ENCODE measurements at regions of chr6 and their contacts with region 1.

Region 1: GRCh38 chr6:137271245-137272183 is 52.3 kb upstream of the IFNGR1 start:
- DNase-seq: no peak
- ATAC-seq: peak; percentile 92
- H3K4me3 ChIP-seq: no peak overlapping the region
- H3K27ac ChIP-seq: no peak overlapping the region
- H3K4me1 ChIP-seq: peaks cover 3% of the 10 kb centered on the region
- H3K27me3 ChIP-seq: no peaks in the 10 kb centered on the region
- CTCF ChIP-seq: peak; percentile 80 to 91 (median 85)
- EP300 ChIP-seq: no peak
- POLR2A ChIP-seq: no peak
- RAD21 ChIP-seq: peak; percentile 100

Region 2: GRCh38 chr6:137076277-137077068 is 195.0 kb before region 1 on chr6:
- CTCF ChIA-PET with region 1: interaction called, 30 read pairs
- POLR2A ChIA-PET with region 1: no interaction called
- RAD21 ChIA-PET with region 1: interaction called, 8 read pairs
- SMC1A ChIA-PET with region 1: interaction called, 35 read pairs
- in situ Hi-C with region 1: no loop called
- intact Hi-C with region 1: loop called (anchors 5 kb)
- DNase-seq: no peak
- ATAC-seq: peak; percentile 100
- H3K4me3 ChIP-seq: no peak overlapping the region
- H3K27ac ChIP-seq: peak overlapping the region; percentile 42
- H3K4me1 ChIP-seq: peaks cover 7% of the 10 kb centered on the region
- H3K27me3 ChIP-seq: no peaks in the 10 kb centered on the region
- CTCF ChIP-seq: peak; percentile 90 to 96 (median 93); a peak in 5 of 6 replicates
- EP300 ChIP-seq: no peak
- POLR2A ChIP-seq: no peak
- RAD21 ChIP-seq: peak; percentile 96

Region 3: DNA sequence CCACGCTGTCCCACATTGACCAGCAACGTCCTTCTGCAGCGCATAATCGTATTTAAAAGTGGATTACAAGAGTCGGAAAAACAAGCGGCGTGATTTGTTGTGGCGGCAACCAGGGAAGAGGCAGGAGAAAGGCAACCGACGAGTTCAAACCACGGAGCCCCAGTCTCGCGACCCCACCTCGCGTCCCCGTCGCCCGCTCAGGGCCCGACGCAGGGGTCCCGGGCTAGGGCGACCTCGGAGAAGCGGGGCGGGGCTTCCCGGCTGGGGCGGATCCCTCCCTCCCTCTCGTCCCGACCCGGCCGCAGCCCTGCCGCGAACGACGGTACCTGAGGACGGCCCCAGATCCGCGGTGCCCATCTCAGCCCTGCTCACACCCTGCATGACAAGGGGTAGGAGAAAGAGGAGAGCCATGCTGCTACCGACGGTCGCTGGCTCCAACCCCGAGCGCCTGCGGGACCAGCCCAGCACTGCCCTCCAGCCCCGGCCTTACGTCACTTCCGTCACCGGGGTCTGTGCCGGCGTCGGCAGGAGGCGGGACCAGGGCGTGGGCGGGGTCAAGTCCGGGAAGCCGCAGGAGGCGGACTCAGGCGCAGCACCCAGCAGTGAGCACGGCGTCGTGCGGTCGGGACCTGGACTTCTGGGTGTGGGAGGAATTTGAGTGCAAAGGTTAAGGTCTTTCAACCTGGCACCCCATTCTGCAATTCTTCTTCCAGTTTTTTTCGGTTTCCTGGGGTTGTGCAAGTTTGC is 52.4 kb before region 1 on chr6 and contains the start of gene IFNGR1:
- CTCF ChIA-PET with region 1: interaction called, 7 read pairs
- POLR2A ChIA-PET with region 1: interaction called, 3 read pairs
- RAD21 ChIA-PET with region 1: interaction called, 26 read pairs
- SMC1A ChIA-PET with region 1: interaction called, 14 read pairs
- in situ Hi-C with region 1: no loop called
- intact Hi-C with region 1: loop called (anchors 2 kb)
- DNase-seq: peak; percentile 81
- ATAC-seq: peak; percentile 79
- H3K4me3 ChIP-seq: peak within 1 kb of the TSS; percentile 91
- H3K27ac ChIP-seq: peak within 1 kb of the TSS; percentile 94
- H3K4me1 ChIP-seq: peaks cover 15% of the 10 kb centered on the region
- H3K27me3 ChIP-seq: no peaks in the 10 kb centered on the region
- CTCF ChIP-seq: no peak
- EP300 ChIP-seq: no peak
- POLR2A ChIP-seq: peak; percentile 94
- RAD21 ChIP-seq: no peak
- polyA plus RNA-seq, gene IFNGR1: 182 to 296 TPM

Region 4: DNA sequence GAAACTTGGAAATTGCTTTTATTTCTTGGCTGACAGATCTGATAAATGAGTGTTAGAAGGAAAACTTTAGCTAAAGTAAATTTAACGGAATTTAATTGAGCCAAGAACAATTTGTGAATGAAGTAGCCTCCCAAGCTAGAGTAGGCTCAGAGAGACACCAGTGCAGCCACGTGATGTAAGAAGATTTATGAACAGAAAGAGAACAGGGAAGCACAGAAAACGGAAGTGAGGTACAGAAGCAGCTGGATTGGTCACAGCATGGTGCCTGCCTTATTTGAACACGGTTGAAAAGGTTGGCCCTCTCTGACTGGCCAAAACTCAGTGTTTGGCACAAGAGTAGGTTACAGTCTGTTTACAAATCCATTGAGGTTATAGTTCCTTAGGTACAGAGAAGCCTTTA is 22.8 kb before region 1 on chr6:
- CTCF ChIA-PET with region 1: interaction called, 21 read pairs
- POLR2A ChIA-PET with region 1: interaction called, 6 read pairs
- RAD21 ChIA-PET with region 1: interaction called, 15 read pairs
- SMC1A ChIA-PET with region 1: interaction called, 13 read pairs
- in situ Hi-C with region 1: no loop called
- intact Hi-C with region 1: no loop called
- DNase-seq: no peak
- ATAC-seq: peak; percentile 84
- H3K4me3 ChIP-seq: no peak overlapping the region
- H3K27ac ChIP-seq: peak overlapping the region; percentile 37; the same call in 1 of the 2 replicates
- H3K4me1 ChIP-seq: peaks cover 11% of the 10 kb centered on the region
- H3K27me3 ChIP-seq: no peaks in the 10 kb centered on the region
- CTCF ChIP-seq: no peak
- EP300 ChIP-seq: no peak
- POLR2A ChIP-seq: no peak
- RAD21 ChIP-seq: no peak

Region 5: DNA sequence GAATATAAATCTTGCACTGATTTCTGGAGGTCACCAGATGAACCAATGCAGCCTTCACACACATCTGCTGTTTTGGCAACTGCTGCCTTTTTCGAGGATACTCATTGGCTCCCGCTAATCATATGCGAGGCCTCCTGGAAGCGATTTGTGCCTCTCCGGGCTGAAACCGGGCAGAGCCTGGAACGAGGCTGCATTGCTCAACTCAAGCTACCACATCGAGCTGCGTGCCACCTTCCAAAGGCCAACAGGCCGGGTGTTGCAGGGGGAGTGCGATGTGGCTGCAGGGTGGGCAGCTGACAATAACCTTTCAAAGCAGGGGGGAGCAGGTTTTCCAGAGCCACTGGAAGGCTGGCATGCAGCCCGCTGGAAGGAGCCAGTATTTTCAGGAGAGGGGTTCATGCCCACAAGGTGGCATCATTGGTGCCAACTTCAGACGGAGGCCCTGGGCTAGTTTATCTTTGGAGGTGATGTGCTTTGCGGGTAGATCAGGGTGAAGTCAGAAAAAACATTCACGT is 70.2 kb after region 1 on chr6:
- CTCF ChIA-PET with region 1: interaction called, 4 read pairs
- POLR2A ChIA-PET with region 1: no interaction called
- RAD21 ChIA-PET with region 1: no interaction called
- SMC1A ChIA-PET with region 1: interaction called, 11 read pairs
- in situ Hi-C with region 1: no loop called
- intact Hi-C with region 1: no loop called
- DNase-seq: no peak
- ATAC-seq: peak; percentile 70
- H3K4me3 ChIP-seq: no peak overlapping the region
- H3K27ac ChIP-seq: no peak overlapping the region
- H3K4me1 ChIP-seq: no peaks in the 10 kb centered on the region; the same call in 1 of the 2 replicates
- H3K27me3 ChIP-seq: no peaks in the 10 kb centered on the region; a peak in 2 of 4 replicates
- CTCF ChIP-seq: peak; percentile 32 to 49 (median 40); a peak in 3 of 6 replicates
- EP300 ChIP-seq: no peak
- POLR2A ChIP-seq: no peak
- RAD21 ChIP-seq: peak; percentile 57

Region 6: DNA sequence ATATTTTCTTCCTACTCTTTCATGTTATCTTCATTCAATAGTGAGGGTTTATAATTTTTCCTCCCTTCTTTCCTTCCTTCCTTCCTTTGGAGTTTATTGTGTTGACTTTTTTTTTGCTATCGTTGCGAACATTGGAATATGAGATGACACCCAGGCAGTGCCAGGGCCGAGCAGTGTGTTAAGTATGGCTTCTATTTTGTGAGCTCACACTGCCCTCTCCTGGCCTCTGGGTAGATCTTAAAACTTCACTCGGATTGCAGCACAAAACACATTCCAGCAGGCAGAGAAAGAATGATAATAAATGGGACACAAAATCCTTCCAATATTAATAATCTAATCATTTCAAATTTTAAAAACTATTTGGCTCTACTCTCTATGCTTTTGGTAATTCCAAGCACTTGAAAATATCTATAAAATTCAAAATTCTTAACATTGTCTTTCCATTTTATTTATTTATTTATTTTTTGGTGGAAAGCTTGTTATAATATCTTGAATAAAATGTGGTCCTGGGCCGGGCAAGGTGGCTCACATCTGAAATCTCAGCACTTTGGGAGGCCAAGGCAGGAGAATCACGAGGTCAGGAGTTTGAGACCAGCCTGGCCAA is 370.1 kb after region 1 on chr6:
- CTCF ChIA-PET with region 1: interaction called, 16 read pairs
- POLR2A ChIA-PET with region 1: no interaction called
- RAD21 ChIA-PET with region 1: interaction called, 7 read pairs
- SMC1A ChIA-PET with region 1: interaction called, 7 read pairs
- in situ Hi-C with region 1: no loop called
- intact Hi-C with region 1: loop called (anchors 1 kb)
- DNase-seq: no peak
- ATAC-seq: peak; percentile 79
- H3K4me3 ChIP-seq: no peak overlapping the region
- H3K27ac ChIP-seq: no peak overlapping the region
- H3K4me1 ChIP-seq: peaks cover 21% of the 10 kb centered on the region
- H3K27me3 ChIP-seq: no peaks in the 10 kb centered on the region
- CTCF ChIP-seq: peak; percentile 53 to 83 (median 65)
- EP300 ChIP-seq: no peak
- POLR2A ChIP-seq: no peak
- RAD21 ChIP-seq: peak; percentile 91

Measured in GM12878 (cell line).